ENCODE measurements at regions of chrX and their contacts with region 1.

Region 1: DNA sequence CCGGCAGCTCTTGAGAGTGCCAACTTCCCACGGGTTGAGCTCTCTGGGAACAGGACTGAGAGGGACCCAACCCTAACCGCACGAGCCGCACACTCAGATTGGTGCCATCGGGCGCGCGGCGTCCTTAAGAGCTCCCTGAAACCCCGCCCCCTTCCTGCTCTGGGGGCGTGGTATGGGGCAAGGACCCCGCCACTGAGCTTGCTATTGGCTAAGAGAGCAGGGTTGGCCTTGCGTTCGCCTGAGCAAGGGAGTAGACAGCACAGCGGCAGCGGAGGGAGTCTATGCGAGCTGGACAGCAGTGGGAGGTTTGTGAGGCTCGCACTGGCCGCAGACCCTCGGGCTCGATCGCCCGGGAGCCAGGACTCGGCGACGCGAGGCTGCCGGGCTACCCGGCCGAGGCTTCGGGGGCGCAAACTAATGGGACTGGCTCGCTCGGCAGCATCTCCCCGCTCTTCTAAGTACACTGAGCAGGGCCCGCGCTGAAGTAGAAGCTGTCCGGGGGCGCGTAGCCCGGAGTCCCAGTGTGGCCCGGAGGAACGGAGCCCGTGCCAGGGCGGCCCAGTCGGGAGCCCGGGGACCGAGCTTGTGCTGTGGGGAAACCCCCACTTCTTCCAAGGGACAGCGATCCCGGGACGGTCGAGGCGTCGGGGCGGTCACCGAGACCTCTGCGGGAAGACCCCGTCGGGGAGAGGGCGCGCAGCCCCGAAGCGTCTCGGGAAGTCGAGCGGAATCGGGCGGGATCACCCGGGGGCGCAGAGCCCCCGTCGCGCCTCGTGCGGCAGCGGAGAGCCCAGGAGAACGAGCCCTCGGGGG is at the start of gene EFNB1:
- DNase-seq: peak; percentile 89 to 92
- H3K4me3 ChIP-seq: peak within 1 kb of the TSS; percentile 70
- H3K4me3 Mint-ChIP-seq: peak within 1 kb of the TSS; percentile 83
- H3K27ac Mint-ChIP-seq: no peak within 1 kb of the TSS
- H3K4me1 ChIP-seq: no peaks in the 10 kb centered on the region
- H3K4me1 Mint-ChIP-seq: no peaks in the 10 kb centered on the region
- H3K27me3 ChIP-seq: no peaks in the 10 kb centered on the region
- H3K27me3 Mint-ChIP-seq: no peaks in the 10 kb centered on the region
- CTCF ChIP-seq: no peak
- total RNA-seq, gene EFNB1: 5.7 and 7.0 TPM in 2 replicates

Region 2: GRCh38 chrX:68784816-68785215 is 44.1 kb before region 1 on chrX:
- CTCF ChIA-PET with region 1: no interaction called
- POLR2A ChIA-PET with region 1: no interaction called
- intact Hi-C with region 1: no loop called
- DNase-seq: no peak
- H3K4me3 ChIP-seq: no peak overlapping the region
- H3K4me3 Mint-ChIP-seq: no peak overlapping the region
- H3K27ac Mint-ChIP-seq: no peak overlapping the region
- H3K4me1 ChIP-seq: no peaks in the 10 kb centered on the region
- H3K4me1 Mint-ChIP-seq: no peaks in the 10 kb centered on the region
- H3K27me3 ChIP-seq: no peaks in the 10 kb centered on the region
- H3K27me3 Mint-ChIP-seq: peaks cover 8% of the 10 kb centered on the region
- CTCF ChIP-seq: no peak

Region 3: DNA sequence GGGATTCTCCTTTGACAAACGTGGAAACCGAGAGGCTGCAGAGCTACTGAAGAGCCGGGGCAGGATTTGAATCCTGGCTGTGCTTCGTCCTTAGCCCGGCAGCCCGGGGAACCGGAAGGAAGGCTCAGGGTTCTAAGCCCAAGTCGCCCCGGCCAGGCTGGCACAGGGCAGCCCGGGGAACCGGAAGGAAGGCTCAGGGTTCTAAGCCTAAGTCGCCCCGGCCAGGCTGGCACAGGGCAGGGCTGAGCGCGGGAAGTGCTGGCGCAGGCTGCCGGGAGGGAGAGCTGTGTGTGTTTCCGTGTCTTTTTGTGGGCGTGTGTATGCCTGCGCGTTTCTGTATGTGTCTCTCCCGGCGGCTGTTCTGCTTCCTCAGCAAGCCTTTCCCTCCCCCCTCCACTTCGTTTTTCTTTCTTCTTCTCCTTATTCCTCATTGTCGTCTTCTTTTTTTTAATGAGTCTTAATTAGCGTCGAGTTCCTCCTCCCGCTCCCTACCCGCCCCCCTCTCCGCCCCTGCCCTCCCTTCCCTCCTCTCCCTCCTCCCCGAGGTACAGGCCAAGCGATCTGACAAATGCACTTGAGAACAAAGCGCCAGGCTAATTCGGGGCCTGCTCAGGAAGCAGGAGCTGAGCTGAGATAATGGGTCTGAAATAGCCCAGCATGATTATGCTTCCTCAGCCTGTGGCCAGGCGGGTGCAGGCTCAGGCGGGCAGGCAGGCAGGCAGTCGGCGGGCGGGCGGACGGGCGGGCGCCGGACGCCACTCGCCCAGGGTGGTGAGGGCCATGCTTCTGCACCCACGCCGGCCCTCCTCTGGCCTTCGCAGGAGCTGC is 65.8 kb after region 1 on chrX:
- CTCF ChIA-PET with region 1: interaction called, 5 read pairs
- POLR2A ChIA-PET with region 1: no interaction called
- intact Hi-C with region 1: loop called (anchors 5 kb)
- DNase-seq: no peak
- H3K4me3 ChIP-seq: no peak overlapping the region
- H3K4me3 Mint-ChIP-seq: no peak overlapping the region
- H3K27ac Mint-ChIP-seq: no peak overlapping the region
- H3K4me1 ChIP-seq: no peaks in the 10 kb centered on the region
- H3K4me1 Mint-ChIP-seq: no peaks in the 10 kb centered on the region
- H3K27me3 ChIP-seq: no peaks in the 10 kb centered on the region
- H3K27me3 Mint-ChIP-seq: no peaks in the 10 kb centered on the region
- CTCF ChIP-seq: no peak

Region 4: GRCh38 chrX:69060631-69061408 is 231.9 kb after region 1 on chrX:
- CTCF ChIA-PET with region 1: interaction called, 20 read pairs
- POLR2A ChIA-PET with region 1: interaction called, 6 read pairs
- intact Hi-C with region 1: loop called (anchors 1 kb)
- DNase-seq: peak; percentile 34 to 35
- H3K4me3 ChIP-seq: no peak overlapping the region
- H3K4me3 Mint-ChIP-seq: no peak overlapping the region
- H3K27ac Mint-ChIP-seq: no peak overlapping the region
- H3K4me1 ChIP-seq: no peaks in the 10 kb centered on the region
- H3K4me1 Mint-ChIP-seq: no peaks in the 10 kb centered on the region
- H3K27me3 ChIP-seq: no peaks in the 10 kb centered on the region
- H3K27me3 Mint-ChIP-seq: no peaks in the 10 kb centered on the region
- CTCF ChIP-seq: peak in 1 of 2 experiments; percentile 35

Region 5: DNA sequence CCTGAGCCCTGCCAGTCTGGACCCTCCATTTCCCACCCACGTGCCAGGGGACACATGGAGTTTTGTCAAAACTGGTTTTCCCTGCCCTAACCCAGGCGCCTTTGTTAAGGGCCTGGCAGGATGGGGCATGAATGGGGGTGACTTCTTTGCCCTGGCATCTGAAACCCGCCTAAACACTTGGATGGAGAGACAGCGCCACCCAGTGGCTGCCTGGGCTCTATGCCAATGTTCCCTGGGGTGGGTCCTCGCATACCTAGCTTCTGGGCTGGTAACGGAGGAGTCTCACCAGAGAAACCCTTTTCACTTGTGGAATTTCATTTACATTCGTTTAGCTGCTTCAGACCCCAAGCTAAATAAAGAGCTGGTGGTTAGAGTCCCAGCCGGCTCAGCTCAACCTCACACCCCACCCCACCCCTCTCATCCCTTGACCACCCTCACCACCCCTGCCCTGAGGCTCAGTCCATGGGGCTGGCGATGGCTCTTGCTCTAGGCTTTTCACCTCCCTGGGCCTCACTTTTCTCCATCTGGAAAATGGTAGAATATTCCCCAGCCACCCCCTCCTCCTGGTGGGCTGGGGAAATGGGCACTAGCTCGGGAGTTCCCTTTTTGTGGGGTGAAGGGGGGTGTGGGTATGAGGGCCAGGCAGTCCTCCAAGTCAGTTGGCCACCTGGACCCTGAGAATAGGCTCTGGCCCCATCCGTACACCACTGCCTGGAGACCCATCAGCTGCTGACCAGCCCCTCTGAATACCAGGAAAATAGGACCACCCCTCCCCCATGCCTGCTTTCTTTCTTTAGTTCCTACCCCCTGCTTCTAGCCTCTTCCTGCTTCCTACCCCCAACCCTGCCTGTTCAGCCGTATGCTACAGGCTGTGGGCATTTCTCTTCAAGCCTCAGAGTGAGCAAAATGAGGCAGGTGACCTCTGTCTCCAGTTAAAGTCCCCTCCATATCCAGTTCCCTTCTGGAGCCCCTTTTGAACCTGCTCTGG is 393.5 kb after region 1 on chrX:
- CTCF ChIA-PET with region 1: interaction called, 31 read pairs
- POLR2A ChIA-PET with region 1: interaction called, 4 read pairs
- intact Hi-C with region 1: loop called (anchors 1 kb)
- DNase-seq: peak; percentile 48 to 70
- H3K4me3 ChIP-seq: no peak overlapping the region
- H3K4me3 Mint-ChIP-seq: no peak overlapping the region
- H3K27ac Mint-ChIP-seq: no peak overlapping the region
- H3K4me1 ChIP-seq: no peaks in the 10 kb centered on the region
- H3K4me1 Mint-ChIP-seq: no peaks in the 10 kb centered on the region
- H3K27me3 ChIP-seq: no peaks in the 10 kb centered on the region
- H3K27me3 Mint-ChIP-seq: peaks cover 2% of the 10 kb centered on the region
- CTCF ChIP-seq: peak; percentile 70 to 78

Region 6: GRCh38 chrX:69387567-69388487 is 558.9 kb after region 1 on chrX:
- CTCF ChIA-PET with region 1: interaction called, 10 read pairs
- POLR2A ChIA-PET with region 1: no interaction called
- intact Hi-C with region 1: loop called (anchors 1 kb)
- DNase-seq: peak; percentile 56 to 66
- H3K4me3 ChIP-seq: no peak overlapping the region
- H3K4me3 Mint-ChIP-seq: no peak overlapping the region
- H3K27ac Mint-ChIP-seq: no peak overlapping the region
- H3K4me1 ChIP-seq: no peaks in the 10 kb centered on the region
- H3K4me1 Mint-ChIP-seq: no peaks in the 10 kb centered on the region
- H3K27me3 ChIP-seq: no peaks in the 10 kb centered on the region
- H3K27me3 Mint-ChIP-seq: peaks cover 6% of the 10 kb centered on the region
- CTCF ChIP-seq: peak; percentile 63 to 68

Measured in Caco-2 (cell line).